Common myeloid progenitor, CD34-positive (primary cell): ENCODE measurements at regions of chr2 and their contacts with region 1.

Region 1: GRCh38 chr2:61405813-61406212 is 65.1 kb downstream of the USP34 start:
- DNase-seq: no peak
- H3K4me3 ChIP-seq: no peak overlapping the region
- H3K27ac ChIP-seq: no peak overlapping the region
- H3K4me1 ChIP-seq: no peaks in the 10 kb centered on the region
- H3K27me3 ChIP-seq: no peaks in the 10 kb centered on the region

Region 2: DNA sequence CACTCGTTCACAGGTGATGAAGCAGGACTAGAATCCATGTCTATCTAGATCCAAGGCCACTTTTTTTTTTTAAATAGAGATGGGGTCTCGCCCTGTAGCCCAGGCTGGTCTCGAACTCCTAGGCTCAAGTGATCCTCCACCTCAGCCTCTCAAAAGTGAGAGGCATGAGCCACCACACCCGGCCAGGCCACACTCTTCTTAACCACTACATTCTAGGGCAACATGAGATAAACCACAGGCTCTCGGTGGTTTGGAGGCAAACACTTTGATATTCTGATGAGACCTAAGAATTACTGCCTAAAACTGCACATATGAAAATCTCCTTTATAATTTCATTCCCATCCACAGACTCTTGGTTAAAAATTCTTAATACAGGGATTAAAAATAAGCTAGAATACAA is 13.3 kb after region 1 on chr2:
- CTCF ChIA-PET with region 1: interaction called, 10 read pairs
- POLR2A ChIA-PET with region 1: no interaction called
- DNase-seq: peak in 1 of 3 donors; percentile 29
- H3K4me3 ChIP-seq: no peak overlapping the region
- H3K27ac ChIP-seq: no peak overlapping the region
- H3K4me1 ChIP-seq: peaks cover 11 to 23% (median 13%) of the 10 kb centered on the region in 4 experiments
- H3K27me3 ChIP-seq: no peaks in the 10 kb centered on the region